BJ (cell line): ENCODE measurements at regions of chr4 and their contacts with region 1.

Region 1: GRCh38 chr4:80112236-80112635 is 39.2 kb upstream of the ANTXR2 start:
- DNase-seq: peak; percentile 64
- H3K4me3 ChIP-seq: no peak overlapping the region
- H3K27me3 ChIP-seq: no peaks in the 10 kb centered on the region
- CTCF ChIP-seq: no peak

Region 2: DNA sequence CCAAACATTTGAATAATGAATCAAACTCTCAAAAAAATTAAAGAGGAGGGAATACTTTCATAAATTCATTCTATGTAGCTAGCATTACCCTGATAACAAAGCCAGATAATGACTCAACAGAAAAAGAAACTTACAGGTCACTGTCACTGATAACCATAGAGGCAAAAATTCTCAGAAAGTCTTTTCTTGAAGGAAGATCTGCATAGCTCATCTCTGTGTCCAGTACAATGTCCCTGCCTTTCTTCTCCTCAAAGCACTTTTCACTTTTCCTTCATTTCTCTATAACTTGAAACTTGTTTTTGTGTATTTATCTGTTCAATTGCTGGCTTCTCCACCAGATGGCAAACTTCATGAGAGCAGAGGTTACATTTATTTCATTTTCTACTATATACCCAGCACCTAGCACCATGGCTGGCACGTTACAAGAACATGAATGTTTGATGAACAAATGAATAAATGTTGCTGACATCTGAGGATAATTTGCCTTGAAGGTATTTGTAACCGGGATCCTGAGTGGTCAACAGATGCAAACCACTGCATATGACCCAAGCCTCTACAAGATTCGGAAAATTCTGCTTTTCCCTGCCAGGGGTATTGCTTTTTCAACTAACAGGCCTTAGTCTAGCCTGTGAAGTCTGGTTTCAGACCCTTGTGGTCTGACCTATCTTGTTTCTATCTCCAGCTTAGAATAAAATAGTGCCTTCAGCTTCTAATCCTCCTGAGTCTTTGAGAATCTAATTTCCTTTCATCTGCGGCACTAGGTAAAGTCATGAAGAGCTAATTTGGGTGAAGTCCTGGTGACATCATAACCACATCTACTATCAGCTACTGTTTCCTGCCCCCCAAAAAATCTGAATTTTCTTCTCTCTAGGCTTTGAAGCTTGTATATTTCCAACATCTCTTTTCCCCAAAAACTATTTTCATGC is 13.3 kb after region 1 on chr4:
- CTCF ChIA-PET with region 1: interaction called, 14 read pairs
- POLR2A ChIA-PET with region 1: no interaction called
- DNase-seq: no peak
- H3K4me3 ChIP-seq: no peak overlapping the region
- H3K27me3 ChIP-seq: no peaks in the 10 kb centered on the region
- CTCF ChIP-seq: peak; percentile 64